Activated CD4-positive, alpha-beta memory T cell treated with anti-CD3 and anti-CD28 coated beads for 36 hours (primary cell): ENCODE measurements at regions of chr6 and their contacts with region 1.

Region 1: GRCh38 chr6:12637960-12638641 is 78.5 kb upstream of the PHACTR1 start:
- DNase-seq: peak; percentile 57
- H3K4me3 Mint-ChIP-seq: no peak overlapping the region
- H3K27ac Mint-ChIP-seq: no peak overlapping the region
- H3K4me1 Mint-ChIP-seq: no peaks in the 10 kb centered on the region
- H3K27me3 Mint-ChIP-seq: peaks cover 24% of the 10 kb centered on the region

Region 2: DNA sequence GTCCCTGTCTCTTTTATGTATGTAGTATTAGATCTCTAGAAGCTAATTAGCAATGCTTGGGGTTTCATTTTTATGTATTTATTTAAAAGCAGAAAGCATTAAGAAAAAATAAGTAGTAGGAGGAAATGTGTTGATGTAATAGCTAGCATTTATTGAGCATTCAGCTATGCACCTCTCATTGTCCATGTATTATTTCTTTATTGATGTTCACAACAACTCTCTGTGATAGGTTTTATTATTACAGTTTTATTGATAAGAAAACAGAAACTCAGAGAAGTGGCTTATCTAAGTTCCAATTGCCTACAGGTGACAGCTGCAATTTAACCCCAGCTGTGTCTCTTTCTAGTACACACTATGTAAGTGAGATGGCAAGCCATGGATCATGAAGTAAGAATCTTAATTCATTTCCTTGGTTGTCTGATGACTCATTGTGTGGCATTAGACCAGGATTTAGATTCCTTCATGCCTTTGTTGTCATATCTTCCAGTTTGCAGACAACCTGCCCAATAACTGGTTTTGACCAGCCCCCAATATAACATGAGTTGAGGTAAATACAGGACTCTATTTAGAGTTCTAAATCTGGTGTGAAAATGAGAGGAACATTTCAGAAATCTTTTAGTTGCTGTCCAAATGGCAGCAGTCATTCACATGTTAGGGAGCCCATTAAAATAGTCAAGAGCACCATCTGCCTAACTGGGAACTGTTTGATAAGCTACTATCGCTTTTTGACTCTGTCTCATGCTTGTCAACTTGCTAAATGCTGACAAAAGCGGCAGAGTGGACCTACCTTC is 92.3 kb before region 1 on chr6:
- CTCF ChIA-PET with region 1: no interaction called
- POLR2A ChIA-PET with region 1: no interaction called
- intact Hi-C with region 1: no loop called
- DNase-seq: no peak
- H3K4me3 Mint-ChIP-seq: no peak overlapping the region
- H3K27ac Mint-ChIP-seq: no peak overlapping the region
- H3K4me1 Mint-ChIP-seq: no peaks in the 10 kb centered on the region
- H3K27me3 Mint-ChIP-seq: peaks cover 7% of the 10 kb centered on the region

Region 3: GRCh38 chr6:12844290-12845223 is 206.5 kb after region 1 on chr6:
- CTCF ChIA-PET with region 1: no interaction called
- POLR2A ChIA-PET with region 1: no interaction called
- intact Hi-C with region 1: loop called (anchors 1 kb)
- DNase-seq: no peak
- H3K4me3 Mint-ChIP-seq: no peak overlapping the region
- H3K27ac Mint-ChIP-seq: no peak overlapping the region
- H3K4me1 Mint-ChIP-seq: no peaks in the 10 kb centered on the region
- H3K27me3 Mint-ChIP-seq: peaks cover 2% of the 10 kb centered on the region

Region 4: DNA sequence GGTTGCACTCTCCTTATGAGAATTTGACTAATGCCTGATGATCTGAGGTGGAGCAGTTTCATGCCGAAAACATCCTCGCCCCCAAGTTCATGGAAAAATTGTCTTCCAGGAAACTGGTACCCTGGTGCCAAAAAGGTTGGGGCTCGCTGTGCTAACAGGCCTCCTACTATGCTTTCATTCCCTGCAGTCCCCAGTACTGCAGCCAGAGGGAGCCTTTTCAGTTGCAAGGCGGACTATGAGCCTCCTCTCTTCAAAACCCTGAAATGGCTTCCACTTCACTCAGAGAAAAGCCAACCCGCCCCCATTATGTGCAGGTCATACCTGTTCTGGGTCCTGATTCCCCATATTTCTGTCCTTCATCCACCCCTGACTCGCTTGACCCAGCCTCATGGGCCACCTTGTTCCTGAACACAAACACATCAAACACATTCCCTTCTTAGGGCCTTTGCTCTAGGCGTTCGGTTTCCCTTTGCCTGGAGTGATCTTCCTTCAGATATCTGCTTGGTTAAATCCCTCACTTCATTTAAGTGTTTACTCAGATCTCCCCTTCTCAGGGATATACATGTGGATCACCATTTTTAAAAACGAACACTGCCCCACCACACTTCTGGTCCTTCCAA is 252.2 kb after region 1 on chr6:
- CTCF ChIA-PET with region 1: interaction called, 8 read pairs
- POLR2A ChIA-PET with region 1: no interaction called
- intact Hi-C with region 1: loop called (anchors 1 kb)
- DNase-seq: peak; percentile 31
- H3K4me3 Mint-ChIP-seq: no peak overlapping the region
- H3K27ac Mint-ChIP-seq: no peak overlapping the region
- H3K4me1 Mint-ChIP-seq: no peaks in the 10 kb centered on the region
- H3K27me3 Mint-ChIP-seq: peaks cover 10% of the 10 kb centered on the region